Posterior vena cava (tissue), 2 donors: ENCODE measurements at regions of chr2 and their contacts with region 1.

Region 1: GRCh38 chr2:95526360-95527341 is 42.1 kb upstream of the TRIM43B start:
- DNase-seq: peak; percentile 89

Region 2: GRCh38 chr2:95539836-95540235 is 13.2 kb after region 1 on chr2:
- intact Hi-C with region 1: loop called in 1 of 2 experiments (anchors 2 kb)
- DNase-seq: no peak